Activated B cell treated with CpG ODN at 0.5 μM for 24 hours (primary cell): ENCODE measurements at regions of chr10 and their contacts with region 1.

Region 1: DNA sequence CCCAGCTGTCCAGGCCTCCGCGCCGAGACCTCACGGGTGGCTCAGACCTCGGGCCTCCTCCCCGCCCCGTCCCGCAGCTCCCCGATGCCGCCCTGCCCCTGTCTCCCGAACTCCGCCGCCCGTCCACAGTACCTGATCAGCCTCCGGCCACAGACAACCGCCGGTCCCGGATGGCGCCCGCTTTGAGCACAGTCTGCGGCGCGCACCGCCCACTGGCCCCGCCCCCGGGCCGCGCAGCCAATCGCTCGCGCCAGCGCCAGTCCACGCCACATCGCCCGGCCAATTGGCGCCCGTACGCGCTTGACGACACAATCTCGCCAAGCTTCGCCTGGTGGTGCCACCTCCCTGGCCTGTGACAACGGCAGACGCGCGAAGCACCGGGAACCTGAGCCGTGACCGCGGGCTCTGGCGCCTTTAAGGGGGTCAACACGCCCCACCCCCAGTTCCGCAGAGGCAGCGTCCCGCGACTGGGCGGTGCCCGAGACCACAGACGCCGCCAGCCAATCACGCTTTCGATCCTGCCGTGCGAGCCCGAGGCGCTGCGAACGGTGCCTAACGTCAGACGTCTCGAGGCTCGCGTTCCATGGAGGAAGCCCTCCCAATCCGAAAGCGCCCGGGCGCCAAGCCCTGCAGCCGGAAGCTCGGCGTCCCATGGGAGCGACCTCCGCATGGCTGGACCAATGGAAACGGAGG is at the start of gene IDI1:
- DNase-seq: peak; percentile 96
- ATAC-seq: peak; percentile 77
- H3K4me3 Mint-ChIP-seq: peak within 1 kb of the TSS; percentile 94
- H3K27ac Mint-ChIP-seq: peak within 1 kb of the TSS; percentile 98
- H3K4me1 Mint-ChIP-seq: peaks cover 71% of the 10 kb centered on the region
- H3K27me3 Mint-ChIP-seq: no peaks in the 10 kb centered on the region
- CTCF ChIP-seq: no peak
- total RNA-seq, gene IDI1: 75.8 and 79.8 TPM in 2 replicates

Region 2: GRCh38 chr10:851901-852300 is 197.0 kb before region 1 on chr10:
- CTCF ChIA-PET with region 1: no interaction called
- POLR2A ChIA-PET with region 1: no interaction called
- intact Hi-C with region 1: loop called (anchors 5 kb)
- DNase-seq: peak; percentile 18
- ATAC-seq: peak; percentile 88
- H3K4me3 Mint-ChIP-seq: peak overlapping the region; percentile 62
- H3K27ac Mint-ChIP-seq: peak overlapping the region; percentile 73
- H3K4me1 Mint-ChIP-seq: peaks cover 70% of the 10 kb centered on the region
- H3K27me3 Mint-ChIP-seq: no peaks in the 10 kb centered on the region
- CTCF ChIP-seq: no peak

Region 3: GRCh38 chr10:1036341-1036791 is 12.5 kb before region 1 on chr10:
- CTCF ChIA-PET with region 1: no interaction called
- POLR2A ChIA-PET with region 1: interaction called, 69 read pairs
- intact Hi-C with region 1: no loop called
- DNase-seq: peak; percentile 27
- ATAC-seq: peak; percentile 90
- H3K4me3 Mint-ChIP-seq: peak overlapping the region; percentile 20
- H3K27ac Mint-ChIP-seq: peak overlapping the region; percentile 72
- H3K4me1 Mint-ChIP-seq: peaks cover 30% of the 10 kb centered on the region
- H3K27me3 Mint-ChIP-seq: no peaks in the 10 kb centered on the region
- CTCF ChIP-seq: no peak